ENCODE measurements at regions of chr5 and their contacts with region 1.

Region 1: DNA sequence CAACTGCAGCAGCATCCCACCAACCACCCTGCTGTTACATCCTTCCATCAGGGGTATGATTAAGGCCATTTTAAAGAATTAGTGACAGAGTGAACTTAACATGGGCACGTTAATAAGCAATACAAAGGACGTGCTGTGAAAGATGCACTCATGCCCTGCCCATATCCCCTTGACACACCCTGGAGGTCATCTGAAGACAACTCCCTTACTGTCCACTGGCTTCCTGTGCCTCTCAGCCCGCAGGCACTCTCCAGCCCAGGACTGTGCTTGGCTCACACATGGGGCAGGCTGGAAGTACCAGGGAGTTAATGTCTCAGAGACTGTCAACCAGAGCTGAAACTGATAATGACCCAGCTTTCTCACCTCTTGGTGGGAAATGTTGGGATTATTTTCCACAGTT is 81.8 kb downstream of the TRIM36 start:
- DNase-seq: no peak
- ATAC-seq: no peak

Region 2: DNA sequence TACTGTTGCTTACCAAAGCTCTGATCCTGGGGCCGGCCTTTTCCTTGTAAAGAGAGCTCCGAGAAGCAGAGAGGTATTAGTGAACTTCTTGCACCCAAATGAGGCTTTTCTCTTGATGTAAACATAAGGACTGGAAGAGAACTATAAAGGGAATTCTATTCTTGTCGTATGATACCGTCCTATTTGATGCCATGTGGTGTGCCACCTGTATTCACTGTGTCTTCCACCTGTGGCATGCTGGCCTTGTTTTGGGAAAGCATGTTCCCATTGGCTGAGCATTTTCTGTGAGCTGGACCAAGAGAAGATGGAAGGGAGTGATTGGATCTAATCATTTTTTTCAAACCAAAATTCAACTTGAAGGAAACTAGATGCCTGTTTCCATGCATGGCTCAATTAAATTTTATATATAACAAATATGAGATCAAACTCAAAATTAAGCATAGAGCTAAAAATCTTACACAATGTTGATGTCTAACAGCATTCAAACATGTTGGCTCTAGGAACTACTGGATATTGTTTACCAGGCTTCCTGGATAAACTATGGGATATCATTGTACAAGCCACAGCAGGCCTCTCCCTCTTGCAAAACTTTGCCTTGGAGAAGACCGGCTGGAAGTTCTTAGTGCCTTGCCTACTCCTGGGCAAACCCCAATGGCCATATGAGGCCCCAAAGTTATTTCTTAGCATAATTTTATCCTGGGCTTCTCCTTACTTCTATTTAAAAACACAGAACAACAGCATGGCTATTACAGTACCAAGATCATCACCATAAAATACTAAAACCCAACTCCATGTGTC is 1768.5 kb before region 1 on chr5:
- intact Hi-C with region 1: loop called (anchors 5 kb)
- DNase-seq: no peak
- ATAC-seq: no peak

Measured in sciatic nerve (tissue), 2 donors.